GM23248 (cell line): ENCODE measurements at regions of chr5 and their contacts with region 1.

Region 1: DNA sequence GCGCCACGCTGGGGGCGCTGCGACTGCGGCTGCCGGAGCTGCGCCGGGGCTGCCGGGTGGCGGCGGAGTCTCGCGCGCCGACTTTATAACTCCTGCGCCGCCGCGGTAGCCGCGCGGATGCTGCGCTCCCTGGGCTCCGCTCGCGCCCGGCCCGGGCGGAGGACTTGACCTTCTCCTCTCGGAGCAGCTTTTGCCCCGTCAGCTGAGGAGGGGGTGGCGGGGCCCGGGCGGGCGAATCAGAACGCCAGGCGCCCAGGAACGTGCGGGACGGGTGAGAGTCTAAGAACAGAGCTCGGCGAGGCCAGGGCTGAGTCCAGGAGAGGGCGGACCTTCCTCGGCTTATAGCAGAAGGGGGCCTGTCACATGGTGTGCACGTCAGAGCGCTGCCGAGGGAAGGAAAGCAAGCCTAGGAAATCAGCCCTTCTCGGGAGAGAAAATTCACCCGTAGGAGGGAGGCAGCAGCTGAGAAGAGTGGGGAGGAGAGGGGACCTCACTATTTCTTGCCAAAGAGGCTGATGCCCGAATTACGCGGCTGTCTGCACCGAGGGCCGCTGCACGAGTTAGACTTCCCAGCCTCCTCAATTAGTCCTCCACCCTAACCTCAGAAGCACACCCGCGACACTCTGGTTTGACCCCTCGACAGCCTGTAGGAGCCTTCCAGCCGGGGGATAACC is at the start of gene FOXD1:
- DNase-seq: peak; percentile 99
- H3K4me3 ChIP-seq: peak within 1 kb of the TSS; percentile 91
- H3K27ac ChIP-seq: peak within 1 kb of the TSS; percentile 90
- H3K4me1 ChIP-seq: peaks cover 6% of the 10 kb centered on the region
- H3K27me3 ChIP-seq: no peaks in the 10 kb centered on the region
- total RNA-seq, gene FOXD1: 50.0 and 53.9 TPM in 2 replicates

Region 2: GRCh38 chr5:72842816-72843215 is 605.8 kb before region 1 on chr5:
- in situ Hi-C with region 1: no loop called
- DNase-seq: peak; percentile 75
- H3K4me3 ChIP-seq: no peak overlapping the region
- H3K27ac ChIP-seq: peak overlapping the region; percentile 52
- H3K4me1 ChIP-seq: peaks cover 78% of the 10 kb centered on the region
- H3K27me3 ChIP-seq: no peaks in the 10 kb centered on the region

Region 3: GRCh38 chr5:73093943-73094342 is 354.7 kb before region 1 on chr5:
- in situ Hi-C with region 1: loop called (anchors 10 kb)
- DNase-seq: peak; percentile 87
- H3K4me3 ChIP-seq: no peak overlapping the region
- H3K27ac ChIP-seq: peak overlapping the region; percentile 58
- H3K4me1 ChIP-seq: peaks cover 12% of the 10 kb centered on the region
- H3K27me3 ChIP-seq: no peaks in the 10 kb centered on the region

Region 4: GRCh38 chr5:73215891-73216610 is 232.5 kb before region 1 on chr5:
- in situ Hi-C with region 1: loop called (anchors 5 kb)
- DNase-seq: peak; percentile 92
- H3K4me3 ChIP-seq: peak overlapping the region; percentile 73
- H3K27ac ChIP-seq: peak overlapping the region; percentile 49
- H3K4me1 ChIP-seq: peaks cover 8% of the 10 kb centered on the region
- H3K27me3 ChIP-seq: no peaks in the 10 kb centered on the region

Region 5: DNA sequence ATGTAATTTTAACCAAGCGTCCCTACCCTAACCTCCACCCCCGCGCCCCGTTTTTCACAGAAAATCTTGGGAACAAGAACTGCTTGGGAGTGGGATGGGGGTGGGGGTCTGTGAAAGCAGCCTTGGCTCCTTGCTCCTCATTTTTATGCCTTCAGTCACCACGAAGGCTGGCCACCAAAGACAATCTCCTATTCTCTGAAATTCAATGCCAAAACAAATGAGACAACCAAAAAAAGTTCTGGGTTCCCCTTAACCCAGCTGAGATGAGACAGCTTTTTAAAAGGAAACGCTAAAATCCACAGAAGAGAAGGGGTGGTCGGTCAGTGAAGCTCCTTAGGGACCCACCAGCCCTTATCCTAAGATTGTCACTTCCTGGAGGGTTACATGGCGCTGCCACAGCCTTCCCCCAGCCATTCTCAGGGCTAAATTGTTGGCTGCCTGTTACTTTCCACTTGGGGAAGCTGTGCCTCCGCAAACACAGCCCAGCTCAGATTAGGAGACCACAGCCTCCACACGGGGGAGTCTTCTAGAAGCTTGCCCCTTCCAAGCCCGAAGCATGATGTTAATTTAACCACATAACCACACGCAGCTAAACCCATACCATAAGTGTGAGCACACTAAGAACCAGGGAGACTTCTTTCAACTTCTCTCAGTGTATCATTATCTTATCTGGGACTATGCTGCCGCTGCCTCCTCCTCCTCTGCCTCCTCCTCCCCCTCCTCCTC is 136.3 kb before region 1 on chr5:
- in situ Hi-C with region 1: loop called (anchors 25 kb)
- DNase-seq: peak; percentile 96
- H3K4me3 ChIP-seq: peak overlapping the region; percentile 56
- H3K27ac ChIP-seq: peak overlapping the region; percentile 97
- H3K4me1 ChIP-seq: peaks cover 45% of the 10 kb centered on the region
- H3K27me3 ChIP-seq: no peaks in the 10 kb centered on the region